K562 (cell line): ENCODE measurements at regions of chr2 and their contacts with region 1.

Region 1: GRCh38 chr2:158745044-158745865 is 49.9 kb upstream of the DAPL1 start:
- DNase-seq: peak in 2 of 4 experiments; percentile 32 to 58
- ATAC-seq: peak; percentile 88
- H3K4me3 ChIP-seq: no peak overlapping the region
- H3K27ac ChIP-seq: no peak overlapping the region
- H3K4me1 ChIP-seq: no peaks in the 10 kb centered on the region; a peak in 2 of 5 replicates
- H3K27me3 ChIP-seq: peaks cover 26 to 55% of the 10 kb centered on the region in 2 experiments
- CTCF ChIP-seq: peak; percentile 56 to 77 (median 65)
- EP300 ChIP-seq: no peak
- POLR2A ChIP-seq: no peak
- RAD21 ChIP-seq: peak; percentile 60 to 78

Region 2: DNA sequence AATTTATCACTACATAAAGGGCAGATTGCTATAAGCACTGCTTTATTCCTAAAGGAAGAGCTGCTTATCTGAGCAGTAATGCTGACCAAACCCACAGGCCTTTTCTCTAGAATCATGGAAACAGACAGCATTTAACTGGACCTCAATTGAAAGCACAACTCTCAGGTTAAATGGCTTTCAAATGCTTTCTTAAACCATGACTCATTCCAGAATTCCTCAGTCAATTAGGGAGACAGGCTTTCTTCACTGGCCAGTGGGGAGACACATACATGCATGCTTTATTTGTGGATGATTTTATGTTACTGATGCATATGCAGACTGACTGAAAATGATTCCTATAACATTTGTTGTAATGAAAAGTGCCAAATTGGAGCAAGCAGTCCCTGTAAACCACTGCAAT is 983.7 kb before region 1 on chr2:
- CTCF ChIA-PET with region 1: no interaction called
- POLR2A ChIA-PET with region 1: no interaction called
- in situ Hi-C with region 1: no loop called
- intact Hi-C with region 1: loop called (anchors 10 kb)
- DNase-seq: no peak
- ATAC-seq: peak; percentile 25; the same call in 2 of the 3 replicates
- H3K4me3 ChIP-seq: no peak overlapping the region
- H3K27ac ChIP-seq: no peak overlapping the region
- H3K4me1 ChIP-seq: no peaks in the 10 kb centered on the region
- H3K27me3 ChIP-seq: no peaks in the 10 kb centered on the region
- CTCF ChIP-seq: no peak
- EP300 ChIP-seq: no peak
- POLR2A ChIP-seq: no peak
- RAD21 ChIP-seq: no peak

Region 3: GRCh38 chr2:158024288-158024898 is 720.9 kb before region 1 on chr2:
- CTCF ChIA-PET with region 1: interaction called, 5 read pairs
- POLR2A ChIA-PET with region 1: interaction called, 3 read pairs
- in situ Hi-C with region 1: no loop called
- intact Hi-C with region 1: loop called (anchors 2 kb)
- DNase-seq: peak; percentile 56 to 78 (median 64)
- ATAC-seq: peak; percentile 90
- H3K4me3 ChIP-seq: no peak overlapping the region
- H3K27ac ChIP-seq: no peak overlapping the region
- H3K4me1 ChIP-seq: peaks cover 0 to 4% of the 10 kb centered on the region in 2 experiments; a peak in 1 of 5 replicates
- H3K27me3 ChIP-seq: peaks cover 2 to 6% of the 10 kb centered on the region in 2 experiments; a peak in 4 of 5 replicates
- CTCF ChIP-seq: peak; percentile 84 to 95 (median 91)
- EP300 ChIP-seq: no peak
- POLR2A ChIP-seq: no peak
- RAD21 ChIP-seq: peak; percentile 83 to 88

Region 4: DNA sequence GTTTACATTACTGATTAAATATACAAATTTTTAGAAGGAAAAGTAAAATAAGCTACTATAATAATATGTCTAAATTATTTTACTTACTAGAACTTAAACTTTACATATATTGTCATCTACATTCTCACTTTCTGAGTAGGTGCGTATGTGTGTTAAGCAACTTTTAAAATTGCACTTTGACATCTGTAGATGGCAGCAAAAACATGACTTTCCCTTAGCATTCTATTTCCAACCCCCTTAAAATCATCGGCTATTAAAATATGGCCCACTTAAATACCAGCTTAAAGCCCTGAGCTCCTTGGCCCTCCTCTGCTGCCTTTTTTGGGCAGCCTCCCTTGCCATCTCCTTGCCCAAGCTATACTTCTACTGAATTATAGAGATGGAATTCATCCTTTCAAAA is 565.6 kb before region 1 on chr2:
- CTCF ChIA-PET with region 1: interaction called, 3 read pairs
- POLR2A ChIA-PET with region 1: no interaction called
- in situ Hi-C with region 1: no loop called
- intact Hi-C with region 1: loop called (anchors 1 kb)
- DNase-seq: peak in 1 of 4 experiments; percentile 39
- ATAC-seq: peak; percentile 81
- H3K4me3 ChIP-seq: no peak overlapping the region
- H3K27ac ChIP-seq: no peak overlapping the region
- H3K4me1 ChIP-seq: no peaks in the 10 kb centered on the region
- H3K27me3 ChIP-seq: no peaks in the 10 kb centered on the region
- CTCF ChIP-seq: peak; percentile 36 to 69 (median 56); a peak in 5 of 6 replicates
- EP300 ChIP-seq: no peak
- POLR2A ChIP-seq: no peak
- RAD21 ChIP-seq: peak; percentile 60 to 84